Heart left ventricle (tissue), 16 donors: ENCODE measurements at regions of chr11 and their contacts with region 1.

Region 1: DNA sequence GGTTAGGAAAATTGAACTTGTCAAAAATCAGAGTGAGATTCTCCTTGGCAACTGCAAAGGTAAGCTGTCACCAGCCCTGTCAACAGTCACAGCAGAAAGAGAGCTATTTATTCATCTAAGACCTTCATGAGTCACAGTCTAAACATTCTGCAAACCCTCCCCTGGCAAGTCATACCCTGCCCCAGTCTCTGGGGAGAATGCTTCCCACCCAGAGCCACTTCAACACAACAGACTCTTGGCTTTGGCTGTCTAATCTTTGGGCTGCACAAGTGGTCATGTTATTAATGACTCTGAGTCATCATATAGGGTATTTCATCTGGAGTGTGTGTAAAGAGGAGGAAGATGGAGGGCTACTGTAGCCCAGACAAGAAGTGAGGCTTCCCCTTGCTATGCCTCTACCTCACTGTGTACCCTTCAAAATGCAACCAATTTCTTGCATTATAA is 153.4 kb downstream of the CCDC34 start:
- DNase-seq: peak in 4 of 5 donors; percentile 21 to 76 (median 52)
- ATAC-seq: peak in 3 of 4 donors; percentile 64 to 92 (median 89)
- H3K4me3 ChIP-seq: no peak overlapping the region
- H3K27ac ChIP-seq: peak overlapping the region in 3 of 12 donors; percentile 1 to 47 (median 3)
- H3K4me1 ChIP-seq: peaks cover 0 to 37% (median 11%) of the 10 kb centered on the region in 12 donors
- H3K27me3 ChIP-seq: no peaks in the 10 kb centered on the region
- CTCF ChIP-seq: no peak
- POLR2A ChIP-seq: no peak

Region 2: DNA sequence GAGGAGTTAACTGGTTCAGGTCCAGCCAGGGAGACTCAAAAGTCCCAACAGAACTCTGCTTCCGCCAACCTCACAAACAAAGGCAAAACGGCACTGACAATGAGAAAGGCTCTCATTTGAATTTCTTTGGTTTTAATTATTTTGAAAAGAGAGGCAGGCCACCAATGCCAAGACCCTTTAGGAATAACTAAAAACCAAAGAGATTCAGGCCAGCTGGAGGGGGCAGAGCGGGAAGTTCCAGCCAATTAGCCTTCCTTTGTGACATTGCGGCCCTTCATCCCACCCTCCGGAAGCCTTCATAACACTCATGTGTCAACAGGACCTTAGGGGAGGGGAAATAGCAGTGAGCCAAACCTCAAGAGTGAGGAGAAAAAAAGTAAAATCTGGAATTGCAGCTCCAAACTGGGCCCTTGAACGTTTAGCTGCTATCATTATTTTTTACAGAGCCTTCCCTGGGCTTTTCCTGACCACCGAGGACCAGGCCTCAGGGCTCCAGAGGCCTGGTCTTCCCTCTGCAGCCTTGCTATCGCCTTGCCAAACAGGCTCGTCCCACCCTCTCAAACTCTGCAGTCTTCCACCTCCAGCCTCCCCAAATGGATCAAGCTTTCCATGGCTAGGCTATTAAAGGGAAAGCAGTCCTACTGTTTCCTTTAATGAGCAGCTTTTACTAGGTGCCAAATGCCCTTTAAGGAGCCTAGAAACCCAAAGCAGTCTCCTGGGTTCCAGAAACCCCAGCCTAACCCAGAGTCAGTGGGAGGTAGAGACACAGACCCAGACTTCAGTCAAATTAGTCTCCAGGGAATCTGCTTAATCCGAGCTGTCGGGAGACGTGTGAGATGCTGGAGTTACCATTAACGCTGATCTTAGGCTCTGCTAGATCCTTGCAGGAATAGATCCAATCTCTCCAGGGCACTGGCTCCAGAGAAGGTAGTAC is 39.3 kb after region 1 on chr11:
- intact Hi-C with region 1: loop called in 1 of 10 experiments (anchors 5 kb)
- DNase-seq: peak in 4 of 5 donors; percentile 37 to 56 (median 45)
- ATAC-seq: peak; percentile 27 to 80 (median 74)
- H3K4me3 ChIP-seq: no peak overlapping the region
- H3K27ac ChIP-seq: peak overlapping the region in 9 of 12 donors; percentile 21 to 75 (median 64)
- H3K4me1 ChIP-seq: peaks cover 0 to 44% (median 16%) of the 10 kb centered on the region in 12 donors
- H3K27me3 ChIP-seq: no peaks in the 10 kb centered on the region
- CTCF ChIP-seq: no peak
- POLR2A ChIP-seq: no peak

Region 3: GRCh38 chr11:27281740-27282590 is 72.4 kb after region 1 on chr11:
- intact Hi-C with region 1: loop called in 1 of 10 experiments (anchors 5 kb)
- DNase-seq: peak; percentile 42 to 81 (median 72)
- ATAC-seq: peak; percentile 62 to 98 (median 94)
- H3K4me3 ChIP-seq: no peak overlapping the region
- H3K27ac ChIP-seq: peak overlapping the region in 9 of 12 donors; percentile 9 to 53 (median 28)
- H3K4me1 ChIP-seq: peaks cover 0 to 22% (median 5%) of the 10 kb centered on the region in 12 donors
- H3K27me3 ChIP-seq: no peaks in the 10 kb centered on the region
- CTCF ChIP-seq: no peak
- POLR2A ChIP-seq: no peak

Region 4: GRCh38 chr11:27296497-27296896 is 86.9 kb after region 1 on chr11:
- intact Hi-C with region 1: loop called in 1 of 10 experiments (anchors 1 kb)
- DNase-seq: no peak
- ATAC-seq: peak in 2 of 4 donors; percentile 53 to 73
- H3K4me3 ChIP-seq: no peak overlapping the region
- H3K27ac ChIP-seq: peak overlapping the region in 5 of 12 donors; percentile 5 to 62 (median 29)
- H3K4me1 ChIP-seq: peaks cover 0 to 8% (median 0%) of the 10 kb centered on the region in 12 donors
- H3K27me3 ChIP-seq: no peaks in the 10 kb centered on the region
- CTCF ChIP-seq: peak; percentile 44 to 73 (median 60)
- POLR2A ChIP-seq: no peak